OCI-LY7 (cell line): ENCODE measurements at regions of chr6 and their contacts with region 1.

Region 1: GRCh38 chr6:144063744-144064401 is 31.5 kb downstream of the SF3B5 start:
- DNase-seq: peak; percentile 89
- H3K4me3 ChIP-seq: peak overlapping the region; percentile 82
- H3K27ac ChIP-seq: peak overlapping the region; percentile 29
- H3K4me1 ChIP-seq: peaks cover 24% of the 10 kb centered on the region
- CTCF ChIP-seq: peak; percentile 60

Region 2: GRCh38 chr6:143450453-143451371 is 613.2 kb before region 1 on chr6 and contains the starts of genes ADAT2 and PEX3:
- CTCF ChIA-PET with region 1: no interaction called
- POLR2A ChIA-PET with region 1: interaction called, 4 read pairs
- intact Hi-C with region 1: loop called (anchors 10 kb)
- DNase-seq: peak; percentile 95
- H3K4me3 ChIP-seq: peak within 1 kb of the TSS; percentile 94
- H3K27ac ChIP-seq: peak within 1 kb of the TSS; percentile 72
- H3K4me1 ChIP-seq: peaks cover 36% of the 10 kb centered on the region
- CTCF ChIP-seq: no peak
- total RNA-seq, gene ADAT2: 17.6 and 21.7 TPM in 2 replicates
- total RNA-seq, gene PEX3: 10.9 and 14.8 TPM in 2 replicates

Region 3: GRCh38 chr6:143490775-143491174 is 573.1 kb before region 1 on chr6:
- CTCF ChIA-PET with region 1: no interaction called
- POLR2A ChIA-PET with region 1: no interaction called
- intact Hi-C with region 1: no loop called
- DNase-seq: no peak
- H3K4me3 ChIP-seq: no peak overlapping the region
- H3K27ac ChIP-seq: no peak overlapping the region
- H3K4me1 ChIP-seq: no peaks in the 10 kb centered on the region
- CTCF ChIP-seq: no peak

Region 4: GRCh38 chr6:144075187-144075586 is 11.3 kb after region 1 on chr6:
- CTCF ChIA-PET with region 1: no interaction called
- POLR2A ChIA-PET with region 1: interaction called, 17 read pairs
- intact Hi-C with region 1: no loop called
- DNase-seq: no peak
- H3K4me3 ChIP-seq: no peak overlapping the region
- H3K27ac ChIP-seq: no peak overlapping the region
- H3K4me1 ChIP-seq: no peaks in the 10 kb centered on the region
- CTCF ChIP-seq: no peak

Region 5: DNA sequence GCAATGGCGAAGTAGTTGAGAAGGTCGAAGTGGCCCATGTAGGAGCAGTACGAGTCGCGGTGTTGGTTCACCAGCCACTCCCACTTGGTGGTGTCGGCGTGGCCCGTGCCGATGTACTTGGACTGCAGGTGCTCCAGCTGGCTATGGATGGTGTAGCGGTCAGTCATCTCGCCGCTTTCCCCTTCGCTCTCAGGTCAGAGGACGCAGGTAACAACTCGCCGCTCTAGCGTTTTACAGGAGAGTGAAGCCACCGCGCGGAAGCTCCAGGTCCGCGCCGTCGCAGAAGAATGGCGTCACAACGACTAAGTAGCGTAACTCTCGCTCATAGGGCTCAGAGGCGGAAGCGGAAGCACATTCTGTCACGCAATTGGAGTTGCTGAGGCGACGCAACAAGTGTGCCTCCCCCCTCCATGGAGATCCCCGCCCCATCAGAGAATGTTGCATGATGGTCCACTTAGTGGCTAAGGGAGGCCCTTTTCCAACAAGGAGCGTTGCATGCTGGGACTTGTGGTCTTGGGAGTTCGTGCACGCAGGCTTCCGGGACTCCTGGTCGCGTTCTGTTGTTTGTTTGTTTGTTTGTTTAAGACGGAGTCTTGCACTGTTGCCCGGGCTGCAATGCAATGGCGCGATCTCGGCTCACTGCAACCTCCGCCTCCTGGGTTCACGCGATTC is 31.6 kb after region 1 on chr6 and contains the start of gene SF3B5:
- CTCF ChIA-PET with region 1: interaction called, 3 read pairs
- POLR2A ChIA-PET with region 1: interaction called, 10 read pairs
- intact Hi-C with region 1: loop called (anchors 1 kb)
- DNase-seq: peak; percentile 100
- H3K4me3 ChIP-seq: peak within 1 kb of the TSS; percentile 90
- H3K27ac ChIP-seq: peak within 1 kb of the TSS; percentile 30
- H3K4me1 ChIP-seq: peaks cover 22% of the 10 kb centered on the region
- CTCF ChIP-seq: no peak
- total RNA-seq, gene SF3B5: 132 and 187 TPM in 2 replicates

Region 6: GRCh38 chr6:144232176-144232831 is 168.4 kb after region 1 on chr6:
- CTCF ChIA-PET with region 1: no interaction called
- POLR2A ChIA-PET with region 1: no interaction called
- intact Hi-C with region 1: no loop called
- DNase-seq: no peak
- H3K4me3 ChIP-seq: no peak overlapping the region
- H3K27ac ChIP-seq: no peak overlapping the region
- H3K4me1 ChIP-seq: no peaks in the 10 kb centered on the region
- CTCF ChIP-seq: no peak